Pancreas (tissue), 10 donors: ENCODE measurements at regions of chr2 and their contacts with region 1.

Region 1: GRCh38 chr2:210086292-210086691 is 83.9 kb downstream of the RPE start:
- DNase-seq: no peak
- ATAC-seq: peak; percentile 89 to 92 (median 90)
- H3K4me3 ChIP-seq: no peak overlapping the region
- H3K27ac ChIP-seq: no peak overlapping the region
- H3K4me1 ChIP-seq: peaks cover 11 to 20% (median 17%) of the 10 kb centered on the region in 3 donors
- H3K27me3 ChIP-seq: no peaks in the 10 kb centered on the region
- CTCF ChIP-seq: no peak

Region 2: GRCh38 chr2:210189452-210190143 is 103.3 kb after region 1 on chr2:
- intact Hi-C with region 1: loop called in 1 of 3 experiments (anchors 10 kb)
- DNase-seq: no peak
- ATAC-seq: peak; percentile 88 to 94 (median 90)
- H3K4me3 ChIP-seq: no peak overlapping the region
- H3K27ac ChIP-seq: peak overlapping the region in 2 of 4 donors; percentile 68 to 76
- H3K4me1 ChIP-seq: peaks cover 15 to 32% (median 31%) of the 10 kb centered on the region in 3 donors
- H3K27me3 ChIP-seq: no peaks in the 10 kb centered on the region
- CTCF ChIP-seq: no peak